ENCODE measurements at regions of chr6 and their contacts with region 1.

Region 1: GRCh38 chr6:81752138-81752920 is at the start of gene TENT5A:
- DNase-seq: peak; percentile 96 to 98
- H3K4me3 ChIP-seq: peak within 1 kb of the TSS; percentile 69 to 73
- H3K27ac ChIP-seq: peak within 1 kb of the TSS; percentile 95 to 98
- H3K4me1 ChIP-seq: peaks cover 0 to 31% (median 5%) of the 10 kb centered on the region in 4 donors
- H3K27me3 ChIP-seq: no peaks in the 10 kb centered on the region
- CTCF ChIP-seq: no peak

Region 2: DNA sequence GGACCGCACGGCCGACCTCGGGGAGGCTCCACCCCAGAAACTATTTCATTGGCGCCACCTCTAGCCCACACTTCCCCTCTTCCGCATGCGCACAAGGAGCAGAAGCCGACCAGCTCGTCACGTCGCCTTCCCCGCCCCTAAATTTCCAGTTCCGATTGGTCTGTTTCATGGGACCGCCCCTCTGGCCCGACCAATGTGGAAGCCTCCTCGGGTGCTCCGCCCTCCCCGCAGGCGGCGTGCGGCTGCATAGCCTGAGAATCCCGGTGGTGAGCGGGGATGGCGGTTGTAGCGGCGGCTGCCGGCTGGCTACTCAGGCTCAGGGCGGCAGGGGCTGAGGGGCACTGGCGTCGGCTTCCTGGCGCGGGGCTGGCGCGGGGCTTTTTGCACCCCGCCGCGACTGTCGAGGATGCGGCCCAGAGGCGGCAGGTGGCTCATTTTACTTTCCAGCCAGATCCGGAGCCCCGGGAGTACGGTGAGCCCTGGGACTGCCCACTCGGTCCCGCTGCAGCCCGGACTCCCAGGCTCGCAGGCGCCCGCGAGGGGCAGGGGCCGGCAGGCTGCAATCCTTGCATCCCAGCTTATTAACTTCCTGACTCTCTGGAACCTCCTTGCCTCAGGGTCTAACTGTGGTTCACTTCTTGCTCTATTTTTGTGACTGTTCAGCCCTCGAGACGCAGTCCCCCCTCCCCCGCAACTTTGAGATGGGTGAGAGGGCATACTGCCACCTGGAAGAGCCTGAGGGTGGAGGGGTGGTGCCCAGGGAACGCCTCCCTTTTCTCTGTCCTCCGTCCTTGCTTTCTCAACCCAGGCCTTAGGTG is 1645.7 kb before region 1 on chr6 and contains the start of gene BCKDHB:
- intact Hi-C with region 1: loop called (anchors 10 kb)
- DNase-seq: peak; percentile 99 to 100
- H3K4me3 ChIP-seq: peak within 1 kb of the TSS; percentile 73 to 94
- H3K27ac ChIP-seq: peak within 1 kb of the TSS; percentile 88 to 98
- H3K4me1 ChIP-seq: peaks cover 0 to 14% (median 6%) of the 10 kb centered on the region in 4 donors
- H3K27me3 ChIP-seq: no peaks in the 10 kb centered on the region
- CTCF ChIP-seq: no peak

Region 3: GRCh38 chr6:80605165-80605989 is 1147.0 kb before region 1 on chr6:
- intact Hi-C with region 1: loop called (anchors 10 kb)
- DNase-seq: no peak
- H3K4me3 ChIP-seq: no peak overlapping the region
- H3K27ac ChIP-seq: no peak overlapping the region
- H3K4me1 ChIP-seq: peaks cover 0 to 33% (median 18%) of the 10 kb centered on the region in 4 donors
- H3K27me3 ChIP-seq: no peaks in the 10 kb centered on the region
- CTCF ChIP-seq: peak; percentile 54 to 56

Region 4: DNA sequence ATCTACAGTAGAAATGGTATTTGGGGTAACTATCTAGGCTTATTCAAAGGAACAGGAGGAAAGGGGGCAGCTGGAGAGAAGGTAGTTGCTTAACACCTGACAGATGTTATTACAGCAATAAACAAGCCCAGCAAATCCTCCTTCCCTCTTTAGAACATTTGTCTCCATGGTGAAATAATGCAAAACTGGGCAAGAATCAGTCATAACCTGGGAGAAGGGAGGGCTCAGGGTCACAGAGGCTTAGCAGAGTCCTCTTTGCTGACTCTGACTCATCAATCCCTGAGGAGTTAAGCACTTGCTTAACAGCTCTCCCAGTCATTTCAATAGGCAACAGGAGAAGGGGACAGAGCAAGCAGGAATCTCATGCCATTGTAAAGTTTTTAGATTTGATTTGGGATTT is 265.0 kb after region 1 on chr6:
- intact Hi-C with region 1: loop called (anchors 10 kb)
- DNase-seq: peak; percentile 77 to 86
- H3K4me3 ChIP-seq: no peak overlapping the region
- H3K27ac ChIP-seq: peak overlapping the region; percentile 85 to 86
- H3K4me1 ChIP-seq: peaks cover 0 to 73% (median 37%) of the 10 kb centered on the region in 4 donors
- H3K27me3 ChIP-seq: no peaks in the 10 kb centered on the region
- CTCF ChIP-seq: no peak

Region 5: GRCh38 chr6:82144007-82144851 is 391.9 kb after region 1 on chr6:
- intact Hi-C with region 1: loop called (anchors 10 kb)
- DNase-seq: peak; percentile 36 to 75
- H3K4me3 ChIP-seq: peak overlapping the region in 1 of 2 donors; percentile 0
- H3K27ac ChIP-seq: peak overlapping the region; percentile 72 to 75
- H3K4me1 ChIP-seq: peaks cover 0 to 30% (median 21%) of the 10 kb centered on the region in 4 donors
- H3K27me3 ChIP-seq: no peaks in the 10 kb centered on the region
- CTCF ChIP-seq: no peak